Activated CD8-positive, alpha-beta T cell treated with anti-CD3 and anti-CD28 coated beads, Interleukin-2, amount 10 ng/mL, durations not matched to agents 7 days and 5 days (primary cell): ENCODE measurements at regions of chr7 and their contacts with region 1.

Region 1: GRCh38 chr7:24819916-24820689 is 62.8 kb upstream of the GSDME start:
- DNase-seq: peak; percentile 90
- ATAC-seq: peak; percentile 50
- H3K4me3 Mint-ChIP-seq: peak overlapping the region; percentile 60
- H3K27ac Mint-ChIP-seq: peak overlapping the region; percentile 93
- H3K4me1 Mint-ChIP-seq: peaks cover 42% of the 10 kb centered on the region
- H3K27me3 Mint-ChIP-seq: no peaks in the 10 kb centered on the region

Region 2: DNA sequence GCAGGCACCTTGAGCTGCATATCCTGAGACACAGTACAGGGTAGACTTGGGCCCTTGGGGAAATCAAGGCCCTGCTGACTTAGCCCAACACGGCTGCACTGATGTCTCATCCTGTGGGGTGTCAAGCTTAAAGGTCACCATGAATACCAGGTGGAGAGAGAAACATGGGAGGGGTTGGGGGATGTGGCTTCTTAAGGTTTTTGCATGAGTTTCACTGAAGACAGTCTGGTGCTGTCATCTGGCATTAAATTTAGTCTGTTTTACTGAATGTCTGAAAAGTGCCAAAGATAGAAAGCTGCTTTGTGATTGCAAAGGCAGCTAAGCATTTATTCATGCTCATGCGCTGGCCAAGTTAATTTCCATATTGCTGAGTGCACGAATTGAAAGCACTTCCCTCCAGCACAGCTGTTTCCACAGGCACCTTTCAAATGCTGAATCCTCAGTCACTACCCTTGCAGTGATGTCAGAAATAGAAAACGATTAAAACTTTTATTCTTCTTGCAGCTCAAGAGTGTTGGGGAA is 57.7 kb after region 1 on chr7:
- CTCF ChIA-PET with region 1: interaction called, 10 read pairs
- POLR2A ChIA-PET with region 1: no interaction called
- DNase-seq: peak; percentile 28
- ATAC-seq: peak; percentile 55
- H3K4me3 Mint-ChIP-seq: no peak overlapping the region
- H3K27ac Mint-ChIP-seq: peak overlapping the region; percentile 54
- H3K4me1 Mint-ChIP-seq: peaks cover 22% of the 10 kb centered on the region
- H3K27me3 Mint-ChIP-seq: no peaks in the 10 kb centered on the region

Region 3: GRCh38 chr7:24913801-24914464 is 93.8 kb after region 1 on chr7:
- CTCF ChIA-PET with region 1: interaction called, 22 read pairs
- POLR2A ChIA-PET with region 1: interaction called, 7 read pairs
- DNase-seq: no peak
- ATAC-seq: no peak
- H3K4me3 Mint-ChIP-seq: no peak overlapping the region
- H3K27ac Mint-ChIP-seq: peak overlapping the region; percentile 82
- H3K4me1 Mint-ChIP-seq: peaks cover 88% of the 10 kb centered on the region
- H3K27me3 Mint-ChIP-seq: no peaks in the 10 kb centered on the region

Region 4: DNA sequence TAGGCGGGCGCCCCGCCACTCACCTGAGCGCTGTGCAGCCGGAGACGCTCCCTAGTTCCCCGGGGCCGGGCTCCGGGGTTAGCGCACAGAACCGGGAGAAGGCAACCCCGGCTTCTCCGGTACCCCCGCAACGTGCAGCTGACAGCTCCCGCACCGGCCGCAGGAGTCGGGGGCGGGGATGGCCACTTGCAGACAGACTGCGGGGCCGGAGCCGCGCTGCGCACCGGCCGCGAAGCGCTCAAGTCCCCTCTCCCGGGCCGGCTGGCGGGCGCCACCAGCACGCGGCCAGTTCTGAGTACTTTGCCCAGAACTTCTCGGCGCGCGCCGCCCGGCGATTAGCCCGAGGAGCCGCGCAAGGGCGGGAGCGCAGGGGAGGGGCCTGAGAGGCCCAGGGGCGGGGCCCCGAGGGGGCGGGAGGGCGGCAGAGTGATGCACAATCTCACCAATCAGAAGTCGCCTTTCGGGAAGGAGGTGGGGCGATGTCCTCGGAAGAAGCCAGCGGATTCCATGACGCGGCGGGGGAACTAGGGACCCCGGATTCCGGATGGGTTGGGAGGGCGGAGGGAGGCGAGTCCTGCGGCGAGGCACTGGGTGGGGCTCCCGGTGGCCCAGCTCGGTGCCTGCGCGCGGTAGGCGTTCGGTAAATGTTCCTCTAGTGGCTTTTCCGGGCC is 159.9 kb after region 1 on chr7 and contains the start of gene OSBPL3:
- CTCF ChIA-PET with region 1: interaction called, 132 read pairs
- POLR2A ChIA-PET with region 1: interaction called, 51 read pairs
- DNase-seq: peak; percentile 97
- ATAC-seq: peak; percentile 79
- H3K4me3 Mint-ChIP-seq: peak within 1 kb of the TSS; percentile 95
- H3K27ac Mint-ChIP-seq: peak within 1 kb of the TSS; percentile 97
- H3K4me1 Mint-ChIP-seq: peaks cover 69% of the 10 kb centered on the region
- H3K27me3 Mint-ChIP-seq: peaks cover 7% of the 10 kb centered on the region
- total RNA-seq, gene OSBPL3: 73.0 to 83.0 TPM

Region 5: DNA sequence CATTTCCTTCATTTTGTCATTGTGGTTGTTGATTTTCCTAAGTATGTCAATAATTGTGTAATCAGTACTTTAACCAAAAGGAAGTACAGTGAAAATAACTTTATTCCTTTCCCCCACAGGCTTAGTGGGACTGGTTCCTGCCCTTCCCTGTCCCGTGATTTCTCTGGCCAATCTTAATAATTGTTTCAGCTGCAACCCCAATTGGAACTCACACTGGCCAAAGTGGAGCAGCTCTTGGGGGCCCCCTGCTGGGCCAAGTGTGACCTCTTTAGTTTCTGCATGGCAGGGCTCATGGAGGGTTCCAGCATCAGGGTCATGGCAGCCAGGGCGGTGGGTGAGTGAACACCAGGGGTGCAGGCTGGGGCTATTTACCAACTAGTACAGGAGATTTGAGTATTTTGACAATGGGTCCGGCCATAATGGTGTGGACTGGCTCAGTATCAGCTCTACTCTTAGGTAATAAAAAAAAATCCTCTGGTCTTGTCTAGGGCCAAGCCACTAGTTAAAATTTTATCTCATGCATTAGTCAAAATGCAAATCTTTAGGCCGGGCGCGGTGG is 273.2 kb after region 1 on chr7:
- CTCF ChIA-PET with region 1: interaction called, 132 read pairs
- POLR2A ChIA-PET with region 1: no interaction called
- DNase-seq: peak; percentile 86
- ATAC-seq: peak; percentile 87
- H3K4me3 Mint-ChIP-seq: no peak overlapping the region
- H3K27ac Mint-ChIP-seq: no peak overlapping the region
- H3K4me1 Mint-ChIP-seq: peaks cover 7% of the 10 kb centered on the region
- H3K27me3 Mint-ChIP-seq: peaks cover 13% of the 10 kb centered on the region